K562 (cell line): ENCODE measurements at regions of chr1 and their contacts with region 1.

Region 1: GRCh38 chr1:29181413-29182225 is at the start of gene SRSF4:
- DNase-seq: peak; percentile 98 to 100 (median 98)
- ATAC-seq: peak; percentile 92
- H3K4me3 ChIP-seq: peak within 1 kb of the TSS; percentile 95
- H3K27ac ChIP-seq: peak within 1 kb of the TSS; percentile 100
- H3K4me1 ChIP-seq: peaks cover 20 to 32% of the 10 kb centered on the region in 2 experiments
- H3K27me3 ChIP-seq: no peaks in the 10 kb centered on the region
- CTCF ChIP-seq: peak; percentile 94 to 98 (median 95)
- EP300 ChIP-seq: peak; percentile 50; the same call in 1 of the 2 replicates
- POLR2A ChIP-seq: peak; percentile 94
- RAD21 ChIP-seq: peak; percentile 51 to 70
- polyA plus RNA-seq, gene SRSF4: 15.9 to 18.4 TPM

Region 2: DNA sequence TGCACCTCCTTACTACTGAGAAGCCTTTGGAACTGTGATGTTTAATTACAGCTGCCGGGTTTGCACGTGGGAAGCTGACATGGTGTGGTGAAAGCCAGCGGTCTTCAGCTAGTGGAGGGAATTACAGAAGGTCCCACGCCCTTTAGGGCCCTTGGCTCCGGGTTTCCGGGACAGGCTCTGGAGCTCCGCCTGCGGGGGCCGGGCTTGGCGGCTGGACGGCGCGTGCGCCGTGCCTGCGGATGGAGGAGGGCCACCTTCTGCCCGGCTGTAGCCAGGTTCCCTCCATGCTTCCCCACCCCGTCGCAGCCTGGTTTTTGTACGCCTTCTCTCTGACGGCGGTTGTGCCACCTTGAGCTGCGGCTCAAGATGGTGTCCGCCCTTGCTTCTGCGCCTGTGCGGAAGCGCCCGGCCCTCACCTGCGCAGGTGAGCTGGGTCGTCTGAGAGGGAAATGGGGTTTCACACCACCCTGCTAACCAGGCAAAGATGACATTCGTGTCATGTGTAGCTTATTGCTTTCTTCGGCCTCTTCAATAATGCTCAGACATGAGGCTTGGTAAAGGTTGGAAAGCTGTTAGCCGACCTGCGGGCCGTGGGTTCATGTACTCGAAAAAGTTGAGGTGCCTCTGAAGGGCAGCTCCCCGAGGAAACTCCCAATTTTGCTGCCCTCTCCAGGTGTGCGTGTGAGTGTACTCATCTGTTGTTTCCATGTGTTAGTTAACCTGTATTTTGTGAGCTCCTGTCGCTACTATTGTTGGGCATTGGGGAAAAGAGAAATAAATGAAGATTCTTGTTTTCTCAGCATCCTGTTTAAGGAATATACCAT is 406.3 kb before region 1 on chr1:
- CTCF ChIA-PET with region 1: no interaction called
- POLR2A ChIA-PET with region 1: no interaction called
- in situ Hi-C with region 1: loop called (anchors 10 kb)
- intact Hi-C with region 1: no loop called
- DNase-seq: peak in 2 of 4 experiments; percentile 24 to 42
- ATAC-seq: peak; percentile 34; the same call in 1 of the 3 replicates
- H3K4me3 ChIP-seq: no peak overlapping the region
- H3K27ac ChIP-seq: no peak overlapping the region
- H3K4me1 ChIP-seq: peaks cover 0 to 5% of the 10 kb centered on the region in 2 experiments; a peak in 2 of 5 replicates
- H3K27me3 ChIP-seq: no peaks in the 10 kb centered on the region
- CTCF ChIP-seq: no peak
- EP300 ChIP-seq: no peak
- POLR2A ChIP-seq: no peak
- RAD21 ChIP-seq: no peak

Region 3: GRCh38 chr1:29057700-29058099 is 123.9 kb before region 1 on chr1:
- CTCF ChIA-PET with region 1: no interaction called
- POLR2A ChIA-PET with region 1: no interaction called
- in situ Hi-C with region 1: no loop called
- intact Hi-C with region 1: no loop called
- DNase-seq: no peak
- ATAC-seq: peak; percentile 41; the same call in 1 of the 3 replicates
- H3K4me3 ChIP-seq: no peak overlapping the region
- H3K27ac ChIP-seq: no peak overlapping the region
- H3K4me1 ChIP-seq: no peaks in the 10 kb centered on the region
- H3K27me3 ChIP-seq: no peaks in the 10 kb centered on the region
- CTCF ChIP-seq: no peak
- EP300 ChIP-seq: no peak
- POLR2A ChIP-seq: no peak
- RAD21 ChIP-seq: no peak

Region 4: DNA sequence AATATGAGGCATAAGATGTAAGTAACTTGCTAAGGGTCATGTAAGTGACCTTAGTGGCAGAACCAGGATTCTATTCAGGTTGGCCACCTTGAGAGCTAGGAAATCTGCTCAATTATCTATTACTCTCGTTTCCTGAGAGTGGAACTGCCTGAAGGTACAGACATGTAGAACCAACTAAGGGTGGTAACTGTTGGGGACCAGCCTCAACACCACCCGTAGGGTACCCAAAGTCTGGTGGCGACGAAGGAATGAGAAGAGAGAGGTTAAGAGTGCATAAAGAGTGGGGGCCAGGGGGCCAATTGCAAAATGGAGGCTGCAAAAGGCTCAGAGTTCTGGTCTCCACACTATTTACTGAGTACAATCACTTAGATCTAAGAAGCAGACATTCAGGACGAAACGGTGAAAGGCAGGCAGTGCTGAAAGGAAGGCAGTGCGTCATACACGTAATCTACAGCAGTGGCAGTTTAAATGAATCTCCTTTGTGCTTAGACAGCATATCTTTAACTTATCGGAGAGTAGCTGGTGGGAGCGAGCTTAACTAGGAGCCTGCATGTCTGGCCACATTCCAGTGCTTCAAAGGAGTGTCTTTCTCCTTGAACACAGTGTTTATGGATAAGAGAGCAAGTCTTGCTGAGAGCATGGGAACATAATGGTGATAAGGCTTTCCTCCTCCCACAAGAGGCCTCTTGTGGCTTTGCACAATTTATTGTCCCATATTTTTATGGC is 24.9 kb before region 1 on chr1:
- CTCF ChIA-PET with region 1: interaction called, 3 read pairs
- POLR2A ChIA-PET with region 1: interaction called, 129 read pairs
- in situ Hi-C with region 1: no loop called
- intact Hi-C with region 1: no loop called
- DNase-seq: peak; percentile 59 to 97 (median 70)
- ATAC-seq: peak; percentile 93
- H3K4me3 ChIP-seq: peak overlapping the region; percentile 8; the same call in 1 of the 2 replicates
- H3K27ac ChIP-seq: peak overlapping the region; percentile 90
- H3K4me1 ChIP-seq: peaks cover 30 to 34% of the 10 kb centered on the region in 2 experiments
- H3K27me3 ChIP-seq: no peaks in the 10 kb centered on the region
- CTCF ChIP-seq: 0 out of 6 replicates have a peak, but pooled peaks of 1 of the 3 experiments have one; percentile 4
- EP300 ChIP-seq: peak; percentile 98
- POLR2A ChIP-seq: peak; percentile 50
- RAD21 ChIP-seq: peak in 1 of 2 experiments; percentile 33; a peak in 2 of 4 replicates

Region 5: GRCh38 chr1:29171089-29171488 is 10.5 kb before region 1 on chr1:
- CTCF ChIA-PET with region 1: no interaction called
- POLR2A ChIA-PET with region 1: interaction called, 129 read pairs
- in situ Hi-C with region 1: no loop called
- intact Hi-C with region 1: no loop called
- DNase-seq: no peak
- ATAC-seq: peak; percentile 62
- H3K4me3 ChIP-seq: no peak overlapping the region
- H3K27ac ChIP-seq: peak overlapping the region; percentile 1; the same call in 1 of the 3 replicates
- H3K4me1 ChIP-seq: peaks cover 3% of the 10 kb centered on the region in 2 experiments; a peak in 3 of 5 replicates
- H3K27me3 ChIP-seq: no peaks in the 10 kb centered on the region
- CTCF ChIP-seq: no peak
- EP300 ChIP-seq: no peak
- POLR2A ChIP-seq: no peak
- RAD21 ChIP-seq: no peak

Region 6: DNA sequence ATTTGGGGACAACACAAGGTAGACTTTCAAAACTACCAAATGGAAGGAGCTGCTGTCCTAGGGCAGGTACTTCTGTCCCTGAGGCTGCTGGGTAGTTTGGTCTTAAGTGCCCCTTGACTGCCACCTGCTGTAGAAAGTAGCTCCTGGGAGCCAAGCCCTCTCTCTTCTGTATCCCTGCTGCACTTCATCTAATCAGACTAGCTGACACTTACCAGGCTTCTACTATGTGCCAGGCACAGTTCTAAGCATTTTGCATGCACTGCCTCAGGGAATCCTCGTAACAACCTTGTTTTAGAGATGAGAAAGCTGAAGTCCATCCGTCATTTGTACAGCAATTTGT is 15.9 kb after region 1 on chr1:
- CTCF ChIA-PET with region 1: interaction called, 9 read pairs
- POLR2A ChIA-PET with region 1: interaction called, 21 read pairs
- in situ Hi-C with region 1: no loop called
- intact Hi-C with region 1: loop called (anchors 1 kb)
- DNase-seq: peak; percentile 44 to 71 (median 53)
- ATAC-seq: peak; percentile 94
- H3K4me3 ChIP-seq: no peak overlapping the region
- H3K27ac ChIP-seq: no peak overlapping the region
- H3K4me1 ChIP-seq: peaks cover 17 to 18% of the 10 kb centered on the region in 2 experiments
- H3K27me3 ChIP-seq: no peaks in the 10 kb centered on the region
- CTCF ChIP-seq: peak; percentile 65 to 79 (median 75)
- EP300 ChIP-seq: no peak
- POLR2A ChIP-seq: no peak
- RAD21 ChIP-seq: peak; percentile 61 to 83; a peak in 3 of 4 replicates

Region 7: GRCh38 chr1:29202584-29203340 is 21.1 kb after region 1 on chr1:
- CTCF ChIA-PET with region 1: interaction called, 9 read pairs
- POLR2A ChIA-PET with region 1: interaction called, 21 read pairs
- in situ Hi-C with region 1: no loop called
- intact Hi-C with region 1: loop called (anchors 1 kb)
- DNase-seq: peak; percentile 95 to 99 (median 96)
- ATAC-seq: peak; percentile 99
- H3K4me3 ChIP-seq: no peak overlapping the region
- H3K27ac ChIP-seq: peak overlapping the region; percentile 78
- H3K4me1 ChIP-seq: peaks cover 22 to 27% of the 10 kb centered on the region in 2 experiments
- H3K27me3 ChIP-seq: no peaks in the 10 kb centered on the region
- CTCF ChIP-seq: peak; percentile 94 to 99 (median 99)
- EP300 ChIP-seq: peak; percentile 92
- POLR2A ChIP-seq: no peak
- RAD21 ChIP-seq: peak; percentile 99

Region 8: DNA sequence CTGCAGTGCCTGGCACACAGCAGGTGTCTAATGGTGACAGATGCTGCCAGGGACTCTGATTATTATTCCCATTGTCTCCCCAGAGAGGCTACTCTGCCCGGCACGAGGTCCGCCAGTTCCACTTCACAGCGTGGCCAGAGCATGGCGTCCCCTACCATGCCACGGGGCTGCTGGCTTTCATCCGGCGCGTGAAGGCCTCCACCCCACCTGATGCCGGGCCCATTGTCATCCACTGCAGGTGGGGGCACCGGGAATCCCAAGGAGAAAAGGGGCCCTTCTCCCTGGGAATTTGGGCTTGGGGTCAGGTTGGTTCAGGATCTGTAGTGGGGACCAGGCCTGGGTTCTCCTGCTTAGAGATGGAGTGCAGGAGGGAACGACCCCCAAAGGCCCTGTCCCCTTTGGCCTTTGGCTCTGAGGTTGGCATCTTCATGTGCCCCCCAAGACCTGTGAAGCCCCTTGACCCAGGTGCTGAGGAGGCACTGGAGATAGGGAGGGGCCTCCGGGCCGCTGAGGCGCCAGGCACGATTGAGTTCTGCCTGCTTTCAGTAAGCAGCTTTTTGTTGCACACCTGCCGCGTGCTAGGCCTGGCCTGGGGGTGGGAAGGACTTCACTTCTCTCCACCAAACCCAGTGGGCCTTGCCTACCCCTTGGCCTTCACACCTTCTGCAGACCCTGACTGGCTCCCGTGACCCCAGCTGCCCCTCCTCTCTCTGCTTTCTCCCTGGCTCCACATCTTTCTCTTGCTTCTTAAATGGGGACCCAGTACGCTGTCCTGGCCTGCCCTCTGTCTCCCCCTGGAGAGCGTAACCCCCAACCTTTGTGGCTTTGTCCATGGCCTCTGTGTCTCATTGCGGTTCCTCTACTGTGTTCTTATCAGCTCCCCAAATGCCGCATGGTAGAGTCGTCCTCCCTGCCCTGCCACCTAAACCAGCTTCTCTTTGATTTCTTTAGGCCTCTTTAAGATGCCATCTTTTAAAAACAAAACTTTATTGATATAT is 131.1 kb after region 1 on chr1:
- CTCF ChIA-PET with region 1: no interaction called
- POLR2A ChIA-PET with region 1: no interaction called
- in situ Hi-C with region 1: no loop called
- intact Hi-C with region 1: no loop called
- DNase-seq: peak; percentile 43 to 50 (median 46)
- ATAC-seq: peak; percentile 66
- H3K4me3 ChIP-seq: no peak overlapping the region
- H3K27ac ChIP-seq: no peak overlapping the region
- H3K4me1 ChIP-seq: peaks cover 0 to 6% of the 10 kb centered on the region in 2 experiments; a peak in 2 of 5 replicates
- H3K27me3 ChIP-seq: peaks cover 24 to 71% of the 10 kb centered on the region in 2 experiments
- CTCF ChIP-seq: peak; percentile 27 to 42 (median 29); a peak in 3 of 6 replicates
- EP300 ChIP-seq: no peak
- POLR2A ChIP-seq: no peak
- RAD21 ChIP-seq: peak in 1 of 2 experiments; percentile 36; a peak in 2 of 4 replicates